K562 (cell line): ENCODE measurements at regions of chr19 and their contacts with region 1.

Region 1: GRCh38 chr19:43765109-43765876 is 10.5 kb upstream of the SMG9 start:
- DNase-seq: peak in 3 of 4 experiments; percentile 37 to 80 (median 47)
- ATAC-seq: peak; percentile 50
- H3K4me3 ChIP-seq: no peak overlapping the region
- H3K27ac ChIP-seq: peak overlapping the region; percentile 76
- H3K4me1 ChIP-seq: peaks cover 30 to 37% of the 10 kb centered on the region in 2 experiments
- H3K27me3 ChIP-seq: no peaks in the 10 kb centered on the region
- CTCF ChIP-seq: no peak
- EP300 ChIP-seq: no peak
- POLR2A ChIP-seq: no peak
- RAD21 ChIP-seq: no peak

Region 2: DNA sequence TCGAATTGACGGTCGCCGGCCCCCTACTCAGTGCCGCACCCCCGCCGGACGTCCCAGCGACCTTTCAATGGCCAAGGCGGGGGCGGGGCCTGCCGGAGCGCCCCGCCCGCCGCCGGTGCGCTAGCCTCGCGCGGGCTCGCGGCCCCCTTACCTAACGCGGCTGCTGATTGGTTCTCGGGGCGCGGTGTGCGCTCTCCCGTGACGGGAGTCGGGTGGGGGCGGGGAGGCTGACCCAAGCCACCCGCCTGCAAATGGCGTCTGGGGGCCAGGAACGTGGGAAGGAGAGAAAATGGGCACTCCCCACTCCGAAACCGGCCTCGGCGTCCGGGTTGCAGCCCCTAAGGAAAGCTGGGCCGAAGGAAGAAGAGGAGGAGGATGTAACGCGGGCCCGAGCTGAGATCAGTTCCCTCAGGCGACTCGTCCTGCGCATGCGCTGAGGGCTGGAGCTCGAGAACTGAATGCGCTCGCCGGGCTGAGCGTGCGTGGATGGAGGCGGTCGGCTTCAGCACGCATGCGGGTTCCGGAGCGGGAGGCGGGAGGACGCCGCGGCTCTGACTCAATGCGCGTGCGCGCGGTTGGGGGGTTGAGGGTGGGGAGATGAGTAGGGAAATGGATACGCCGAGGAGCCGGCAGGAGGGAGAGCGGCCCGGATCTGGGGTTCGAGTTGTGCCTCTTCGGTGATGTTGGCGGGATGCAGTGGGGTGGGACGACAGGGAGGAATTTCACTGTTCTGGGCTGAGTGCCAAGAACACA is 10.6 kb before region 1 on chr19 and contains the start of gene SMG9:
- CTCF ChIA-PET with region 1: no interaction called
- POLR2A ChIA-PET with region 1: interaction called, 71 read pairs
- in situ Hi-C with region 1: no loop called
- intact Hi-C with region 1: no loop called
- DNase-seq: peak; percentile 97 to 98 (median 97)
- ATAC-seq: peak; percentile 90
- H3K4me3 ChIP-seq: peak within 1 kb of the TSS; percentile 70
- H3K27ac ChIP-seq: peak within 1 kb of the TSS; percentile 100
- H3K4me1 ChIP-seq: peaks cover 40 to 41% of the 10 kb centered on the region in 2 experiments
- H3K27me3 ChIP-seq: no peaks in the 10 kb centered on the region
- CTCF ChIP-seq: no peak
- EP300 ChIP-seq: peak; percentile 19; the same call in 1 of the 2 replicates
- POLR2A ChIP-seq: peak; percentile 98
- RAD21 ChIP-seq: no peak
- polyA plus RNA-seq, gene SMG9: 1.7 to 3.9 TPM

Region 3: DNA sequence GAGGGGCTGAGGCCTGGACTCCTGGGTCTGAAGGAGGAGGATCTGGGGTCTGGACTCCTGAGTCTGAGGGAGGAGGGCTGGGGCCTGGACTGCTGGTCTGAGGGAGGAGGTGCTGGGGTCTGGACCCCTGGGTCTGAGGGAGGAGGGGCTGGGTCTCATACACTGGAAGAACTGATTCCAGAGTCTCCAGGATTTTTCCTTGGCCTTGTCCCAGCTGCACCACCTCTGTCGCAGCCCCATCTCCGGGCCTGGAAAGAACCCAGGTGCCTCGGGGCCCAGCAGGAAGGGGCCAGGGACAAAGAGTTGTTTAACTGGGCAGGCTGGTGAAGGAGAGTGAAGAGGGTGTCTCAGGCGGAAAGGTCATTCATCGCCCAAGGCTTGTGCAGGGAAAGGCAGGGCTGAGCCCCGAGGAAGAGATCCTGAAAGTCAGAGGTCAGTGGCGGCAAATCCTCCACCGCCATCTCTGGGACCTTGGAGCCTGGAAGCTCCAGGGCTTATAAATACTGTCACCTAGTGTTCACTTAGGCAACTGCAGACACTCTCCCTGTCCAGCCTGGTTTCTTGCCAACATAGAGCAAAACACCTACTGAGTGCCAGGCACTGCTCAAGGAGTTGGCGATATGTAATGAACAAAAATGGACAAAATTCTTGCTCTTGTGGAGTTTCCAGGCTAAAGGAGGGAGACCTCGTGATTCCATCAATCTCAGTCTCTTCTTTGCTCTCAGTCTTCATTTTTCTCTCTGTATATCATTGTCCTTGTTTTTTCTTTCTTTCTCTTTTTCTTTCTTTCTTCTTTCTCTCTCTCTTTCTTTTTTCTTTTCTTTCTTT is 19.9 kb after region 1 on chr19:
- CTCF ChIA-PET with region 1: interaction called, 6 read pairs
- POLR2A ChIA-PET with region 1: interaction called, 3 read pairs
- in situ Hi-C with region 1: no loop called
- intact Hi-C with region 1: loop called (anchors 1 kb)
- DNase-seq: peak; percentile 69 to 90 (median 73)
- ATAC-seq: peak; percentile 82
- H3K4me3 ChIP-seq: no peak overlapping the region
- H3K27ac ChIP-seq: peak overlapping the region; percentile 75
- H3K4me1 ChIP-seq: peaks cover 44 to 50% of the 10 kb centered on the region in 2 experiments
- H3K27me3 ChIP-seq: no peaks in the 10 kb centered on the region
- CTCF ChIP-seq: peak; percentile 97 to 99 (median 98)
- EP300 ChIP-seq: no peak; the same call in 1 of the 2 replicates
- POLR2A ChIP-seq: no peak
- RAD21 ChIP-seq: peak; percentile 95 to 98